ENCODE measurements at regions of chr5 and their contacts with region 1.

Region 1: DNA sequence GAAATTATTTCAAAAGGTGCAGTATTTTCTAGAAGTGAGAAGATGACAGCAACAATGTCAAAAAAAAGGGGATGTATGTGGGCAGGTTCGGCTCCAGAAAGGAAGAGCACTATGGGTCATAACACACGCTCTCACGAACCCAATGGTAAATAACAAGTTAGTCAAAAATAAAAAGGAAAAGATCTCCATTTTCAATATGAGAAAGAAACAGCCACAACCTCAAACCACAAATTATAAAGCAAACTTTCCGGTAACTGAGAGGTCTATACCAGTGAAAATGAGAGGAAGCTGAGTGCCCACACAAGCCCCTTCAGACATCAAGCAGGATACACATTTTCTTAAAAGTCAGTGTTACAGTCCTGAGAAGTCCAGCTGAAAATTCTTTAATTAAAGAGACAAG is 398.5 kb upstream of the RPS23 start:
- DNase-seq: peak; percentile 74
- H3K4me3 Mint-ChIP-seq: peak overlapping the region; percentile 51
- H3K27ac Mint-ChIP-seq: peak overlapping the region; percentile 79
- H3K4me1 Mint-ChIP-seq: peaks cover 18% of the 10 kb centered on the region
- H3K27me3 Mint-ChIP-seq: no peaks in the 10 kb centered on the region

Region 2: DNA sequence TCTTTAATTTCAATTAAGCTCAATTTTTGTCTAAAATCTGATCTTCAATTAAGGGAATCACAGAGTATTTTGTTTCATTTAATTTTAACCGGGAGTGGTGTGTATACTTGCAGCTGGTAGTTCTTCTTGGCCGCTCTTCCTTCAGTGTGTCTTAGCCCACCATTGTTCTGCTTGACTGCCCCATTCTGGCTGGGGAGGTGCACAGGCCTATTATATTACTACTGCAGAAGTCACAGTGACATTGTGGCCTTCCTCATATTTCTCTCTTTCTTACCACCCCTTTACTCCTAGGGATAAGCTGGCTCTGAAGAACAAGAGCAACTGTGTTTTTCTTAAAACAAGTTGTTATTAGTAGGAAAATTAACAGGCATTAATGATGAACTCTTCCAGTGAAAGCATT is 581.1 kb before region 1 on chr5:
- intact Hi-C with region 1: no loop called
- DNase-seq: no peak
- H3K4me3 Mint-ChIP-seq: no peak overlapping the region
- H3K27ac Mint-ChIP-seq: no peak overlapping the region
- H3K4me1 Mint-ChIP-seq: peaks cover 9% of the 10 kb centered on the region
- H3K27me3 Mint-ChIP-seq: no peaks in the 10 kb centered on the region

Region 3: DNA sequence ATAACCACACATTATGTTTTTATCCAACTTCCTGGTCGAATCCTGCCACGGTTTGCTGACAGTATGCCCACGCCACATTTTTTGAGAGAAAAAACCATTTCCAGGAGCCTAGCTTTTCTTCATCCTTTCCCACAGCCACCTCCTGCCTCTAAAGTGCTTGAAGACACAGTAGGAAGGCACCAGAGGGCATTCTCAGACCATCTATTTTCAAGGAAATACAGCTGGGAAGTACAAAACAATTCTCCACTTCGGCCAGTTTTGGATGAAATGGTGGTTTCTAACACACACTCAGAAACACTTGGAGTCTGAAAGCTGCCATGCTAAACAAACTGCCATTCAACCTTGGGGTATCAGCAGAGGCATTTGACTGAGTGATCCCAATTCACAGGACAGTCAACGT is 312.2 kb before region 1 on chr5:
- intact Hi-C with region 1: loop called (anchors 2 kb)
- DNase-seq: no peak
- H3K4me3 Mint-ChIP-seq: no peak overlapping the region
- H3K27ac Mint-ChIP-seq: no peak overlapping the region
- H3K4me1 Mint-ChIP-seq: peaks cover 38% of the 10 kb centered on the region
- H3K27me3 Mint-ChIP-seq: no peaks in the 10 kb centered on the region

Region 4: GRCh38 chr5:82526540-82526939 is 150.1 kb before region 1 on chr5:
- intact Hi-C with region 1: loop called (anchors 5 kb)
- DNase-seq: no peak
- H3K4me3 Mint-ChIP-seq: no peak overlapping the region
- H3K27ac Mint-ChIP-seq: no peak overlapping the region
- H3K4me1 Mint-ChIP-seq: peaks cover 11% of the 10 kb centered on the region
- H3K27me3 Mint-ChIP-seq: no peaks in the 10 kb centered on the region

Region 5: GRCh38 chr5:82885627-82886389 is 209.1 kb after region 1 on chr5:
- intact Hi-C with region 1: loop called (anchors 5 kb)
- DNase-seq: no peak
- H3K4me3 Mint-ChIP-seq: no peak overlapping the region
- H3K27ac Mint-ChIP-seq: no peak overlapping the region
- H3K4me1 Mint-ChIP-seq: peaks cover 22% of the 10 kb centered on the region
- H3K27me3 Mint-ChIP-seq: no peaks in the 10 kb centered on the region

Region 6: GRCh38 chr5:83076742-83077661 is 400.3 kb after region 1 on chr5 and contains the starts of genes TMEM167A and XRCC4:
- intact Hi-C with region 1: loop called (anchors 5 kb)
- DNase-seq: peak; percentile 98
- H3K4me3 Mint-ChIP-seq: peak within 1 kb of the TSS; percentile 97
- H3K27ac Mint-ChIP-seq: peak within 1 kb of the TSS; percentile 98
- H3K4me1 Mint-ChIP-seq: peaks cover 35% of the 10 kb centered on the region
- H3K27me3 Mint-ChIP-seq: no peaks in the 10 kb centered on the region
- total RNA-seq, gene TMEM167A: 82.0 and 87.4 TPM in 2 replicates
- total RNA-seq, gene XRCC4: 11.4 and 11.6 TPM in 2 replicates

Region 7: GRCh38 chr5:83473346-83474163 is 796.9 kb after region 1 on chr5:
- intact Hi-C with region 1: loop called (anchors 2 kb)
- DNase-seq: peak; percentile 86
- H3K4me3 Mint-ChIP-seq: peak overlapping the region; percentile 96
- H3K27ac Mint-ChIP-seq: peak overlapping the region; percentile 3
- H3K4me1 Mint-ChIP-seq: peaks cover 25% of the 10 kb centered on the region
- H3K27me3 Mint-ChIP-seq: peaks cover 77% of the 10 kb centered on the region

Measured in activated CD4-positive, alpha-beta T cell treated with anti-CD3 and anti-CD28 coated beads, Interleukin-2, amount 10 ng/mL, durations not matched to agents 24 days and 14 days (primary cell).